Posterior vena cava (tissue), 2 donors: ENCODE measurements at regions of chr20 and their contacts with region 1.

Region 1: DNA sequence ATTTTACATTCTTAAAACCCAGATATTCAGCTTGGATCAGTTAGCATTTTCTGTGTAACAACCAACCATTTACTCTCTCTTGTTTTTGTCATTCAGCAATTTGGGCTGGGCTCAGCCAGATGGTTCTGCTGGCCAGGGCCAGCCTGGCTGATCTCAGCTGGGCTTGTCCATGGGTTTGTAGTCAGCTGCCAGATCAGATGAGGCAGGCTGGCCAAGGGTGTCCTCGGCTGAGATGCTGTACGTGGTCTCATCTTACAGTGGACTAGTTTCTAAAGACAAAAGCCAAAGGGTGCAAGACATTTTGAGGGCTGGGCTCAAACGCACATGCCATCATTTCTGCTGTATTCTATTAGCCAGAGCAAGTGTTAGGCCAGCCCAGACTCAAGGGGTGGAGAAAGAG is 16.0 kb upstream of the FAM210B start:
- DNase-seq: no peak

Region 2: GRCh38 chr20:56323656-56324055 is 19.1 kb before region 1 on chr20:
- intact Hi-C with region 1: loop called in 1 of 2 experiments (anchors 1 kb)
- DNase-seq: no peak